ENCODE measurements at regions of chr2 and their contacts with region 1.

Region 1: GRCh38 chr2:9165625-9166024 is 41.0 kb upstream of the ASAP2 start:
- DNase-seq: no peak
- H3K4me3 ChIP-seq: no peak overlapping the region
- H3K27ac ChIP-seq: peak overlapping the region; percentile 41 to 81
- H3K4me1 ChIP-seq: peaks cover 13 to 18% of the 10 kb centered on the region in 2 donors
- H3K27me3 ChIP-seq: no peaks in the 10 kb centered on the region
- CTCF ChIP-seq: no peak

Region 2: GRCh38 chr2:9178904-9179571 is 13.4 kb after region 1 on chr2:
- intact Hi-C with region 1: loop called (anchors 1 kb)
- DNase-seq: peak; percentile 44 to 91
- H3K4me3 ChIP-seq: peak overlapping the region in 1 of 2 donors; percentile 23
- H3K27ac ChIP-seq: peak overlapping the region; percentile 91 to 96
- H3K4me1 ChIP-seq: peaks cover 11 to 28% of the 10 kb centered on the region in 2 donors
- H3K27me3 ChIP-seq: no peaks in the 10 kb centered on the region
- CTCF ChIP-seq: no peak